ENCODE measurements at regions of chr1 and their contacts with region 1.

Region 1: GRCh38 chr1:96882091-96882490 is 160.5 kb downstream of the PTBP2 start:
- DNase-seq: no peak
- H3K4me3 ChIP-seq: no peak overlapping the region
- H3K27ac ChIP-seq: no peak overlapping the region
- H3K4me1 ChIP-seq: peaks cover 3% of the 10 kb centered on the region
- H3K27me3 ChIP-seq: no peaks in the 10 kb centered on the region
- CTCF ChIP-seq: no peak
- POLR2A ChIP-seq: no peak

Region 2: GRCh38 chr1:96538111-96538641 is 343.9 kb before region 1 on chr1:
- CTCF ChIA-PET with region 1: no interaction called
- POLR2A ChIA-PET with region 1: no interaction called
- dilution Hi-C with region 1: no loop called
- intact Hi-C with region 1: no loop called
- DNase-seq: peak; percentile 3
- H3K4me3 ChIP-seq: no peak overlapping the region
- H3K27ac ChIP-seq: no peak overlapping the region
- H3K4me1 ChIP-seq: no peaks in the 10 kb centered on the region
- H3K27me3 ChIP-seq: peaks cover 0 to 5% of the 10 kb centered on the region in 2 experiments
- CTCF ChIP-seq: no peak
- POLR2A ChIP-seq: no peak

Region 3: DNA sequence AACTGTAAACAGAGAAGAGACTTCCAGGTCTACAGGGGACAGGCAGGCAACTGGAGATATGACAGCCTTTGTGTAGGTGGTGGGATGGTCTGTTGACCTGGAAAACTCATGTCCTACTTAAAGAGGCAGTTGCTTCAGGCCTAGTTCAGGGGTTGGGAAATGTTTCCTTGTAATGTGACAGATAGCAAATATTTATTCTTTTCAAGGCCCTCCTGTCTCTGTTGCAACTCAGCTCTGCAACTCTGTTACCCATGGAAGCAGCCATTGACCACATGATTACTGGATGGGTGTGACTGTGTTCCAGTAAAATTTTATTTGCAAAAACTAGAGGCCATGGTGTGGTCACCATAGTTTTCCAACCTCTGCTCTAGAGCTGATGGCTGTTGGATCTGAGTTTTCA is 181.4 kb after region 1 on chr1:
- CTCF ChIA-PET with region 1: no interaction called
- POLR2A ChIA-PET with region 1: no interaction called
- dilution Hi-C with region 1: no loop called
- intact Hi-C with region 1: loop called (anchors 5 kb)
- DNase-seq: no peak
- H3K4me3 ChIP-seq: no peak overlapping the region
- H3K27ac ChIP-seq: no peak overlapping the region
- H3K4me1 ChIP-seq: no peaks in the 10 kb centered on the region
- H3K27me3 ChIP-seq: no peaks in the 10 kb centered on the region
- CTCF ChIP-seq: no peak
- POLR2A ChIP-seq: no peak

Region 4: DNA sequence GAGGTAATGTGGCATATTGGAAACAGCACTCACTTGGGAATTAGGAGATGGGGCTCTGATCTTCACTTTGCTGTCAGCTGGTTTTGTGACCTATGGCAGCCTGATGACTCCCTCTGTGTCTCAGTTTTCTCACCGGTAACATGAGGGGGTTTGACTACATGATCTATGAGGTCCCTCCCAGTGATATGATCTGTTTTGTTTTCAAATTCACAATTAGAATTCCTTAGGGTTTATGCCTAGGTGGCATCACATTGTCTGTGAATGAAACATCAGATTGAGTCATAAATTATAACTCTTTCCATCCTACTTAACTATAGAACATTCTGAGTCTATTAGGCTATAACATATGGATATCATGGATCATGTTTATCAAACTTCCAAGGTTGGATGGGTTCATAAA is 226.1 kb after region 1 on chr1:
- CTCF ChIA-PET with region 1: no interaction called
- POLR2A ChIA-PET with region 1: no interaction called
- dilution Hi-C with region 1: no loop called
- intact Hi-C with region 1: no loop called
- DNase-seq: no peak
- H3K4me3 ChIP-seq: no peak overlapping the region
- H3K27ac ChIP-seq: no peak overlapping the region
- H3K4me1 ChIP-seq: no peaks in the 10 kb centered on the region
- H3K27me3 ChIP-seq: no peaks in the 10 kb centered on the region
- CTCF ChIP-seq: no peak
- POLR2A ChIP-seq: no peak

Measured in endothelial cell of umbilical vein (primary cell).